ENCODE measurements at regions of chr15 and their contacts with region 1.

Region 1: GRCh38 chr15:100602064-100602822 is at the starts of genes ASB7 and LINS1:
- DNase-seq: peak; percentile 100
- H3K4me3 ChIP-seq: peak within 1 kb of the TSS; percentile 75 to 95
- H3K27ac ChIP-seq: peak within 1 kb of the TSS; percentile 71 to 88
- H3K4me1 ChIP-seq: peaks cover 7 to 17% of the 10 kb centered on the region in 2 donors
- H3K27me3 ChIP-seq: no peaks in the 10 kb centered on the region
- CTCF ChIP-seq: no peak
- total RNA-seq, gene ASB7: 9.3 TPM
- total RNA-seq, gene LINS1: 1.7 TPM

Region 2: DNA sequence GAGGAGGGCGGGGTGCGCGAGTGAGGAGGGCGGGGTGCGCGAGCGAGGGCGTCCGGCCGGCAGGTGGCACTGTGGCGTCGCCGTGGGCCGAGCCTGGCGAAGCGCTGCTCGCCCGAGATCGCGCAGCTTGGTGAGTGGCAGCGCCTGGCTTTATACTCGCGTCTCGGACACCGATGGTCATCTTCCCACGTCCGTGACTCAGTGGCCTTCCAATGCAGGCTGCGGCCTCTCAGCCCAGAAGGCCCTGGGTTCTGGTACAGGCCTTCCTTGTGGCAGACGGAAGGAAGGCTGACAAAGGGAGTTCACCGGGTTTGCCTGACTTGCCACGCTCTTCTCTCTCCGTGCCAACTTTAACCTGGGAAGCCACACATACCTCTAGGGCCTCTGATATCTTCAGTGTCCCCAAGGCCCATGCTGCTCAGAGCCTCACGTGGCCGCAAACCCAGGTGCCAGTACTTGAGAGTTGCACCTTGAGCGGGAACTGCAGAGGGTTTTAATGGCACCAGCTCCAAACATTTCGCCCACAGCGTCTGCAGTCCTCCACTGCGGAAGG is 673.7 kb before region 1 on chr15:
- intact Hi-C with region 1: loop called (anchors 2 kb)
- DNase-seq: peak; percentile 24 to 91
- H3K4me3 ChIP-seq: peak overlapping the region; percentile 25 to 56
- H3K27ac ChIP-seq: peak overlapping the region; percentile 80 to 87
- H3K4me1 ChIP-seq: peaks cover 0 to 4% of the 10 kb centered on the region in 2 donors
- H3K27me3 ChIP-seq: no peaks in the 10 kb centered on the region
- CTCF ChIP-seq: peak; percentile 69 to 75 (median 72)

Region 3: DNA sequence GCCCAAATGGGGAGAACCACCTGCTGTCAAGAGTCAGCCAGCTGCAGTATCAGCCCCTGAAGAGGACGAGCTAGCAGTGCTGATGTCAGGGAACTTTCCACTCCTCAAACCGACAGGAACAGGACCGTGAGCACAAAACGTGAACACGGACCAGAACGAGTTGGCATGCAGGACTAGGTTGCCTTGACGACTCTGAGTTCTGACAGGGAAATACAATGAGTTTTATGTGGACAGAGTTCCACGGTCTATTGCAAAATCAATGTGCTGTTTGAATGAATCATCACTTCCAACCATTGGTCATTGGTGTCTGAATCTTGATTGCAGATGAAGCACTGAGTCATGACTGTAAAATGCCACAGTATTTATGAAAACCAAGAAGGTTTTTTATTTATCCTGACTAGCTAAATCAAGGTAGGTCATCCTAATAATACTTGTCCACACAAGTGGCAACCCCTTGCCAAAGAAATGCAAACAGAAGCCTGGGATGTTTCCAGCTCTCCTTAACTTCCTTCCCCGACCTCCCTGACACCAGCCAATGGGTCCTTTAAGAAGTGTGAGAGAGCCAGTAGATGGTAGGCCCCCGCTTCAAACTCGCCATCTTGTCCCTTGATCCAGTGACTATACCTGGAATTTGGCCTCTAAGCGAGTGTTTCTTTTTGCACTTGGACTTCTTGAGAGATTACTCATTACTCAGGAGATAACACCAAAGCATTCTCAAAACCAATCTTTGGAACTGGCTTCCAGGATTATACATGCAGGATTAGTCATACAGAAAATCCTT is 119.7 kb after region 1 on chr15:
- intact Hi-C with region 1: loop called (anchors 5 kb)
- DNase-seq: peak; percentile 66 to 92
- H3K4me3 ChIP-seq: peak overlapping the region in 1 of 2 donors; percentile 25
- H3K27ac ChIP-seq: peak overlapping the region; percentile 70 to 84
- H3K4me1 ChIP-seq: peaks cover 3 to 13% of the 10 kb centered on the region in 2 donors
- H3K27me3 ChIP-seq: no peaks in the 10 kb centered on the region
- CTCF ChIP-seq: no peak

Region 4: DNA sequence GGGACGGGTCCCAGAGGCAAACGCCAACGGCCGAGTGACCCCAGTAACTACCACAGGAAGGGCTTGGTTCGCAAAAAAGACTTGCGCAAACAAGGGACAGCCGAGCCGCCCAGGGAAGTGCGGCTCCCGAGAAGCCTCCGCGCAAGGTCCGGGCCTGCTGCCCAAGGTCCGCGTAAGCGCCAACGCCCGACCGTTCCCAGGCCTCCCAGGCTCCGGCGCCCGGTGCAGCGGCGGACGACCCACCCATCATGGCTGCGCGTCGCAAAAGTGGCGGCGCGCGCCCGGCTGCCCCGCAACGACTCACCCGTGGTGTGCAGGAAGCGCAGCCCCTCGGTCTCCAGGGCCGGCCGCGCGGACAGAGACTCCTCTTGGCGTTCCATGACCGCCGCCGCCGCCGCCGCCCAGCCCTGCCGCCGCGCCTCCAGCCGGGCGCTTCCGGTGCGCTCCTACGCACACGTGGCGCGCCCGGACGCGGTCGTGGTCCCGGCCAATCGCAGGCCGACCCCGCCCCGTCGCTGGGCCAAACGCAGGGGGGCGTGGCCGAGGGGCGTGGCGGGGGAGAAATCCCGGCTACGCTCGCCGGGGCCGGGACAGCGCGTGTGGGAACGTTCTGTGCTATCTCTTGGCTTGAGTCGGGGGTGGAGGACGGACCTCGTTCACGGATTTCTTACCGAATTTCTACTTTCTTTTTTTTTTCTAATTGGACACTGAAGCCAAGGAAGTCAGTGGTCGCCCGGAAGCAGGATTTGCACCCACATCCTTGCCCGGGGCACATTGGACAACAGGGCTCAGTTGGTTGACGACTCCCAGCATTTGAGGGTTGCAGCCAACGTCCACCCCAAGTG is 675.0 kb after region 1 on chr15 and contains the start of gene SELENOS:
- intact Hi-C with region 1: loop called (anchors 5 kb)
- DNase-seq: peak; percentile 52 to 93
- H3K4me3 ChIP-seq: peak within 1 kb of the TSS; percentile 67 to 90
- H3K27ac ChIP-seq: peak within 1 kb of the TSS; percentile 89 to 93
- H3K4me1 ChIP-seq: peaks cover 0 to 14% of the 10 kb centered on the region in 2 donors
- H3K27me3 ChIP-seq: no peaks in the 10 kb centered on the region
- CTCF ChIP-seq: no peak
- total RNA-seq, gene SELENOS: 32.0 TPM

Measured in ascending aorta (tissue), 2 donors.